Activated T-helper 1 cell treated with anti-CD3 and anti-CD28 coated beads, Interleukin-12 subunit alpha, Interleukin-12 subunit beta, Interleukin-2, Interleukin-4 antibody, amounts not matched to agents 30 ng/mL and 10 ng/mL and 1 ng/mL, durations not matched to agents 14 hours and 24 hours and 36 hours (primary cell): ENCODE measurements at regions of chr17 and their contacts with region 1.

Region 1: DNA sequence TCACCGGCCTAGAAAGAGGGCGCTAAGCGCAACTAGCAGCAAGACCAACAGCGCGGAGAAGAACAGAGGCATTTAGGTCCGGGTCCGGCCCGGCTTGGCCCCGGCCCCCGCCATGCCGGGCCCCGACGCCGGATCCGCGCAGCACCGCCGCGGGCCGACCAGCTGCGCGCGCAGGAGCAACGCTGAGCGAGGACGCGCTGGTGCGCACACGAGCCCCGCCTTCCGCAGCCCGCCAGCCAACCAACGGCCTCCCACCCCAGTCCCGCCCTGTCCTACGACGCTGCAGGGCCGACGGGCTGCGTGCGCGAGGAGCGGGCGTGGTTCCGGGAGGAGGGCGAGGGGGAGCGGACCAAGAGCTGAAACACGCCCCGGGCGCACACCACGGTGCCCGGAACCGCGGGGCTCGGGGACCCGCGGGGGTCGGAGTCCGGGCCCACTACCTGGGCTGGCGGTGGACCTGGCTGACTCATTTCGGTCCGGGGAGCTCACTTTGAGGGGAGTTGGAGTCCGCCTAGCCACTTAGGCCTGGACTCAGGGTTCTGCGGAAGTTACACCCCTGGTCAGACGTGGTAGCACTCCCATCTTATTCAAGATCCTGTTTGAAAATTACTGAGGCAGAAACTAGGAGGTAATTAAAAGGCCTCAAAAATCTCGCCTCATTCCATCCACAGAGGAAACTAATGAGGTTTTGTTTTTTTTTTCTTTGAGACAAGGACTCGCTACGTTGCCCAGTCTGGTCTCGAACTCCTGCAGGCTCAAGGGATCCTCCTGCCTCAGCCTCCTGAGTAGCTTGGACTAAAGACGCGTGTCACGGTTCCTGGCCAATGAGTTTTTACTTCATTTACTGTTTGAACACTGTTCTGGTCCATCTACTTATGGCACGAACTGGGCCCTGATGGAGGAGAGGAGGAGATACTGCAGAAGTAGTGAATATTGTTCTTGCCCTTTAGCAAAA is at the start of gene BLTP2:
- DNase-seq: peak; percentile 95
- H3K4me3 Mint-ChIP-seq: peak within 1 kb of the TSS; percentile 91
- H3K27ac Mint-ChIP-seq: peak within 1 kb of the TSS; percentile 82
- H3K4me1 Mint-ChIP-seq: peaks cover 33% of the 10 kb centered on the region
- H3K27me3 Mint-ChIP-seq: no peaks in the 10 kb centered on the region
- total RNA-seq, gene BLTP2: 210 and 212 TPM in 2 replicates

Region 2: GRCh38 chr17:28571255-28572122 is 73.8 kb before region 1 on chr17 and contains the start of gene PIGS:
- intact Hi-C with region 1: loop called (anchors 1 kb)
- DNase-seq: peak; percentile 91
- H3K4me3 Mint-ChIP-seq: peak within 1 kb of the TSS; percentile 94
- H3K27ac Mint-ChIP-seq: peak within 1 kb of the TSS; percentile 88
- H3K4me1 Mint-ChIP-seq: peaks cover 81% of the 10 kb centered on the region
- H3K27me3 Mint-ChIP-seq: no peaks in the 10 kb centered on the region
- total RNA-seq, gene PIGS: 57.8 and 61.2 TPM in 2 replicates

Region 3: GRCh38 chr17:28661635-28662537 is 16.6 kb after region 1 on chr17 and contains the starts of genes SDF2 and SUPT6H:
- intact Hi-C with region 1: loop called (anchors 1 kb)
- DNase-seq: peak; percentile 90
- H3K4me3 Mint-ChIP-seq: peak within 1 kb of the TSS; percentile 100
- H3K27ac Mint-ChIP-seq: peak within 1 kb of the TSS; percentile 99
- H3K4me1 Mint-ChIP-seq: peaks cover 53% of the 10 kb centered on the region
- H3K27me3 Mint-ChIP-seq: no peaks in the 10 kb centered on the region
- total RNA-seq, gene SDF2: 47.9 and 51.0 TPM in 2 replicates
- total RNA-seq, gene SUPT6H: 106 and 108 TPM in 2 replicates

Region 4: GRCh38 chr17:28717578-28718333 is 72.5 kb after region 1 on chr17 and contains the start of gene RAB34:
- intact Hi-C with region 1: loop called (anchors 2 kb)
- DNase-seq: no peak
- H3K4me3 Mint-ChIP-seq: peak within 1 kb of the TSS; percentile 65
- H3K27ac Mint-ChIP-seq: peak within 1 kb of the TSS; percentile 73
- H3K4me1 Mint-ChIP-seq: peaks cover 35% of the 10 kb centered on the region
- H3K27me3 Mint-ChIP-seq: peaks cover 23% of the 10 kb centered on the region
- total RNA-seq, gene RAB34: 17.6 and 18.2 TPM in 2 replicates

Region 5: GRCh38 chr17:28925912-28926365 is 280.7 kb after region 1 on chr17:
- intact Hi-C with region 1: loop called (anchors 10 kb)
- DNase-seq: peak; percentile 62
- H3K4me3 Mint-ChIP-seq: peak overlapping the region; percentile 19
- H3K27ac Mint-ChIP-seq: peak overlapping the region; percentile 92
- H3K4me1 Mint-ChIP-seq: peaks cover 58% of the 10 kb centered on the region
- H3K27me3 Mint-ChIP-seq: no peaks in the 10 kb centered on the region